ENCODE measurements at regions of chr1 and their contacts with region 1.

Region 1: DNA sequence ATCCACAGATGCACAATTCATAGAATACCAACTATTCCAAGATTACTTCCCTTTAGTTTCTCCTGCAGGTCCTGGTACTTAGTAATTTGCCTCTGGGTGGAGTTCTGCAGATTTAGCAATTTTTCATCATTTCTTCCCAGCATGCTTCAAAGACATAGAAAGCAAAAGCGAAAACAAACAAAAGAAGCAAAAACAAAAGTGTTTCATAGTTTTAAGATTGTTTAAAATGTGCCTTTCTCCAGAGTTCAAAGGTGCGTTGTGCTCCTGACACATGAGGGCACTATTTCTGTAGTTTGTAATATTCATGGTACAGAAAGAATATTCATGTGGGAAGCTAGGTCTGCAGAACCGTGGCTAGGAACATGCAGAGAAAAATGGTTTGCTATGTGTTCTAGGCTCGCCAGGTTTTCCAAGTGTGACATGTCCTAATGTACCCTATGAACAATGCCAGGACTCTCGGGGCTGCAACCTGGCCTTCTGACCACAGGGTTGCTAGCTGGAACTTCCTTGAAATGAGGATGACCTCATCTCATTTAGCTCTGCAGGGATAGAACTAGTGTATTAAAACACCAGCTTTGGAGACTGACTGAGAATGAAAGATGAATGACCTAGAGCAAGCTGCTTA is 30.0 kb upstream of the RCSD1 start:
- DNase-seq: no peak
- ATAC-seq: peak; percentile 89

Region 2: DNA sequence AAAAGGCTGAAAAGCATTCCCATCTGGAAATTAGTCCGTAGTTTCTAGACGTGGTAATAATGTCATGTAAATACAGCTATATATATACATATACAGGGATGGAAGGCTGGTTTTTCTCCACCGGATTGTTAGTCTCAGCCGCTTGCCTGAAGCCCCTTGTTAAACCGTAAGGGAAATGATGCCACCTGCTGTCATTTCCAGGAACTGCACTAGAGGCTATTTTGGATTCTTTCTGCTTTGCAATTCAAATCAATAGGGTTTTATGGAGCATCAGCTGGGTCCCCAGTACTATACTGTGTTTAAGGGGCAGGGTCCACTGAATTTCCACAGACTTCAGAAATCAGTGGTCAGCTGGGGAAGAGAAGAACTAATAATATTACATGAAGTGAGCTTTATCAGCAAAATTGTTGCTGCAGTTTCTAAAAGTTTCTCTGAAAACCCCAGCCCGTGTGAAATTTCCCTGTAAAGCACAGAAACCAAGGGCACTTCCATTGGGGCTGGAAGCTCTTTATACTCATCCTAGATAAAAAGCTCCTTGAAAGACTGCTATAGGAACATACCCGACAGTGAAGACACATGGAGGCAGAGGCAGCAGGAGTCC is 88.0 kb after region 1 on chr1:
- intact Hi-C with region 1: loop called (anchors 10 kb)
- DNase-seq: peak; percentile 86
- ATAC-seq: peak; percentile 78